Ovary (tissue), 10 donors: ENCODE measurements at regions of chr5 and their contacts with region 1.

Region 1: DNA sequence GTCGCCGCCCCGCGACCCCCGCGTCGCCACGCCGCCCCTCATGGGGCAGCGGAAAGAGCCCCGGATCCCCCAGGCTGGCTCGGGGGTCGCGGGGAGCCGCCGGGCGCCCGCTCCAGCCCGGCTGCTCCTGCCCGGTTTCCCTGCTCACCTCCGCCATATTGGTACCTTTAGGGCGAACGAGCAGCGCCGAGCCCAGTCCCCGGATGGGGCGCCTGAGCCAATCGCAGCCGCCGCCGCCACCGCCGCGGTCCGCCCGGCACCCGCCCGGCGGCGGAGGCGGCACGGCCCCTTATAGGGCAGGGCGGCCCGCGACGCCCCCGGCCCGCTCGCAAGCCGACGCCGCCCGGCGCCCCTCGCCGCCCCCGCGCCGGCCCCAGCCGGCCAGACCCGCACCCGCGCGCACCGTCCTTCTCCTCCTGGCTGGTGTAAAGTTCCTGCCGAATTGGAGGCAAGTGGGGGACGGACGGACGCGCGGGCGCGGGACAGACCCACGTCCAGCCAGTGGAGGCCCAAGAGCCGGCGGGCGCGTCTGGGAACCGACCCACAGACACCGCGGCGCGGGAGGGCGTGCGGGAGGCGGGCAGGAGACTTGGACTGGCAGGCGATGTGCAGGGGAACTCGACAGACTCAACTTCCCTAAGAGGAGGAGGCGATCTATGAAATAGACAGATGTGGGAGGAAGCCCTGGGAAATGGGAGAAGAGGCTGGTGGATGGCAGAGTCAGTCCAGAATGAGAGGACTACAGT is at the start of gene MIER3:
- DNase-seq: peak; percentile 73 to 86 (median 77)
- H3K4me3 ChIP-seq: peak within 1 kb of the TSS; percentile 90
- H3K27ac ChIP-seq: peak within 1 kb of the TSS; percentile 94 to 100
- H3K4me1 ChIP-seq: peaks cover 5% of the 10 kb centered on the region
- H3K27me3 ChIP-seq: no peaks in the 10 kb centered on the region
- CTCF ChIP-seq: no peak
- EP300 ChIP-seq: no peak
- POLR2A ChIP-seq: no peak
- total RNA-seq, gene MIER3: 28.1 to 57.2 (median 41.0) TPM

Region 2: DNA sequence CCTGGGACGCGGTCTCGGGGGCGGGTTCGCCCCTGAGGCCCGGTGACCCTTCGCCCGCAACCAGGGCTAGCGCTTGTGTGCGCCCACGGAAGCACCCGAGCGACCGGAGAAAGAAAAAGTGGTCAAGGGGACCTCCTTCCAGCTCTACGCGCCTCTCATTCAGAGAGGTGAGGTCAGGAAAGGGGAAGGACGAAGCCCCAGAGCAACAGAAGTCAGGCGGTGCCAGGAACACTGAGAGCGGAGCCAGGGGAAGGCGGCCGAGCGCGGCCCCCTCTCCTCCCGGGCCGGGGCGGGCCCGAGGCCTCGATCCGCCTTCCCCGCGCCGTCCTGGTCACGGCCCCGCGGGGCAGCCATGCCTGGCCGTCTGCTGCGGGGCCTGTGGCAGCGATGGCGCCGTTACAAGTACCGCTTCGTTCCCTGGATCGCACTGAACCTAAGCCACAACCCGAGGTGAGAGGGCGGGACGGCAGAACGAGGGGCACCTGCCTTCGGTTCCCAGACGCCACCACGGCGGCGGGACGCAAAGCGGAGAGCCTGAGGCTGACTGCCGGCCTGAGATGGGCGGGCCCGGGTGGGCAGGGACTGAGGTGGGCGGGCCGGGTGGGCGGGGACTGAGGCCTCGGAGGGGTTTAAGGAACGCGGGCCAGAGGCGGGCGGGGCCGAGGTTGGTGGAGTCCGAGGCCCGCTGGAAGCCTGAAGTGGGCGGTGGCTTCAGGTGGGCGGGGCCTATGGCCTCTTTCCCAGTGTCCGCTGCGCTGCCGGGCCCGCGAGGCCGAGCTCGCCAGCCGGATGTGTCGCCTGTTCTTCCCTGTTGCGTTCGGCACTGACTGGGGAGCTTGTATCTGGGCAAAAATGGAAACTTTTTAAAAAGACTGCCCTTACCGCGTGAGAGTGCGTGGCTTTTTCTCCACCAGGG is 42.6 kb before region 1 on chr5 and contains the start of gene SETD9:
- intact Hi-C with region 1: loop called in 1 of 4 experiments (anchors 2 kb)
- DNase-seq: peak; percentile 98 to 100 (median 99)
- H3K4me3 ChIP-seq: peak within 1 kb of the TSS; percentile 68
- H3K27ac ChIP-seq: peak within 1 kb of the TSS; percentile 43 to 85
- H3K4me1 ChIP-seq: peaks cover 3% of the 10 kb centered on the region
- H3K27me3 ChIP-seq: no peaks in the 10 kb centered on the region
- CTCF ChIP-seq: no peak
- EP300 ChIP-seq: no peak
- POLR2A ChIP-seq: peak; percentile 68
- total RNA-seq, gene SETD9: 2.3 to 9.0 (median 7.0) TPM

Region 3: DNA sequence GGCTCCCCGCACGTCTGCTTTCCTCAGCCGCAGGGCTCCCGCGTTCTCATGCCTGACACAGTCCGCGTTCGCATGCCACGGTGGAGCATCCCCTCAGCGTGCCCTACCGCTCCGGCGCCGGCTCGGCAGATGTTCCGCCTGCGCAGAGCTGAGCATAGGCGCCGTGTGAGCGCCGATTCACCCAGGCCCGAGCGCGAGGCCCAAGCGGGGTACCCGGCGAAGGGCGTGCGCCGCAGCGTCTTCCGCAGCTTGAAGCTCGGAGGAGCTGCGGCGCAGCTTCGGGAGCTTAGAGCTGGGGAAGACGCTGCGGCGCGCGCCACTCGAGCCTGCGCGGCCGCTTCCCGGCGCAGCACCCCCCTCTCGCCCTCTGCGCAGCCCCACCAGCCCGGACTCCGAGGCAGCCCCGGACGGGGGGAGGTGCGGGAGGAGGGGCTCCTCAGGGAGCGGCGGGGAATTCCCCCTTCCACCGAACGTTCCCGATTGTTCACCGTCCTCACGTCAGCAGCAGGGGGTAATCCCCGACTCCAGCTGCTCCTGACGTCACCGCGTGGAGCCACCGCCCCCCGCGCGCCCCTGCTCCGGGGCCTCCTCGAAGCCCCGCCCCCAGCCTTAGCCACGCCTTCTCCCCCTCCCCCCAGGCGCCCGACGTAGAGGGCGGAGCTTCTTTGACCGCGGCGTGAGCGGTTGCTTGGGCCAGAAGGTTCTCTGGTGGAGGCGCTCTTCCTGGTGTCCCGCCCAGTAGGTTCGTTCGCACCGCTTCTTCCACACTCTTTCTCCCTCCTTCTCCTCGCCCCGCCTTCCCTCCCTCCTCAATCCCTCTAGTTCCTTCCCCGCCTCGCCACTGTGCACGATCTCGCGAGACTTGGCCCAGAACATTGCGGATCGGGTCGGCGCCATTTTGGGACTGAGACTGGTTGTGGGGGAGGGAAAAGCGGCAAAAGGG is 221.3 kb after region 1 on chr5 and contains the start of gene GPBP1:
- intact Hi-C with region 1: loop called in 1 of 4 experiments (anchors 10 kb)
- DNase-seq: peak; percentile 98 to 100 (median 99)
- H3K4me3 ChIP-seq: peak within 1 kb of the TSS; percentile 96
- H3K27ac ChIP-seq: peak within 1 kb of the TSS; percentile 97 to 99
- H3K4me1 ChIP-seq: peaks cover 5% of the 10 kb centered on the region
- H3K27me3 ChIP-seq: no peaks in the 10 kb centered on the region
- CTCF ChIP-seq: no peak
- EP300 ChIP-seq: peak; percentile 85
- POLR2A ChIP-seq: peak; percentile 86
- total RNA-seq, gene GPBP1: 78.2 to 124 (median 96.1) TPM